Naive thymus-derived CD4-positive, alpha-beta T cell (primary cell): ENCODE measurements at regions of chr16 and their contacts with region 1.

Region 1: GRCh38 chr16:76500006-76500405 is 222.8 kb downstream of the CNTNAP4 start:
- DNase-seq: no peak
- ATAC-seq: no peak
- H3K4me3 ChIP-seq: no peak overlapping the region
- H3K4me3 Mint-ChIP-seq: no peak overlapping the region
- H3K27ac ChIP-seq: no peak overlapping the region
- H3K27ac Mint-ChIP-seq: no peak overlapping the region
- H3K4me1 ChIP-seq: no peaks in the 10 kb centered on the region
- H3K4me1 Mint-ChIP-seq: no peaks in the 10 kb centered on the region
- H3K27me3 ChIP-seq: no peaks in the 10 kb centered on the region
- H3K27me3 Mint-ChIP-seq: no peaks in the 10 kb centered on the region

Region 2: GRCh38 chr16:76450890-76451289 is 49.1 kb before region 1 on chr16:
- CTCF ChIA-PET with region 1: no interaction called
- POLR2A ChIA-PET with region 1: no interaction called
- intact Hi-C with region 1: no loop called
- DNase-seq: no peak
- ATAC-seq: no peak
- H3K4me3 ChIP-seq: no peak overlapping the region
- H3K4me3 Mint-ChIP-seq: no peak overlapping the region
- H3K27ac ChIP-seq: no peak overlapping the region
- H3K27ac Mint-ChIP-seq: peak overlapping the region in 1 of 9 donors; percentile 55
- H3K4me1 ChIP-seq: no peaks in the 10 kb centered on the region
- H3K4me1 Mint-ChIP-seq: no peaks in the 10 kb centered on the region
- H3K27me3 ChIP-seq: no peaks in the 10 kb centered on the region
- H3K27me3 Mint-ChIP-seq: no peaks in the 10 kb centered on the region

Region 3: GRCh38 chr16:76511203-76511602 is 11.2 kb after region 1 on chr16:
- CTCF ChIA-PET with region 1: no interaction called
- POLR2A ChIA-PET with region 1: no interaction called
- intact Hi-C with region 1: loop called in 1 of 2 experiments (anchors 1 kb)
- DNase-seq: no peak
- ATAC-seq: no peak
- H3K4me3 ChIP-seq: no peak overlapping the region
- H3K4me3 Mint-ChIP-seq: no peak overlapping the region
- H3K27ac ChIP-seq: no peak overlapping the region
- H3K27ac Mint-ChIP-seq: no peak overlapping the region
- H3K4me1 ChIP-seq: no peaks in the 10 kb centered on the region
- H3K4me1 Mint-ChIP-seq: no peaks in the 10 kb centered on the region
- H3K27me3 ChIP-seq: no peaks in the 10 kb centered on the region
- H3K27me3 Mint-ChIP-seq: no peaks in the 10 kb centered on the region